K562 (cell line): ENCODE measurements at regions of chr9 and their contacts with region 1.

Region 1: GRCh38 chr9:76887003-76887821 is 18.7 kb downstream of the PRUNE2 start:
- DNase-seq: no peak
- ATAC-seq: no peak
- H3K4me3 ChIP-seq: no peak overlapping the region
- H3K27ac ChIP-seq: no peak overlapping the region
- H3K4me1 ChIP-seq: no peaks in the 10 kb centered on the region
- H3K27me3 ChIP-seq: no peaks in the 10 kb centered on the region; a peak in 1 of 5 replicates
- CTCF ChIP-seq: no peak
- EP300 ChIP-seq: no peak
- POLR2A ChIP-seq: no peak
- RAD21 ChIP-seq: no peak

Region 2: DNA sequence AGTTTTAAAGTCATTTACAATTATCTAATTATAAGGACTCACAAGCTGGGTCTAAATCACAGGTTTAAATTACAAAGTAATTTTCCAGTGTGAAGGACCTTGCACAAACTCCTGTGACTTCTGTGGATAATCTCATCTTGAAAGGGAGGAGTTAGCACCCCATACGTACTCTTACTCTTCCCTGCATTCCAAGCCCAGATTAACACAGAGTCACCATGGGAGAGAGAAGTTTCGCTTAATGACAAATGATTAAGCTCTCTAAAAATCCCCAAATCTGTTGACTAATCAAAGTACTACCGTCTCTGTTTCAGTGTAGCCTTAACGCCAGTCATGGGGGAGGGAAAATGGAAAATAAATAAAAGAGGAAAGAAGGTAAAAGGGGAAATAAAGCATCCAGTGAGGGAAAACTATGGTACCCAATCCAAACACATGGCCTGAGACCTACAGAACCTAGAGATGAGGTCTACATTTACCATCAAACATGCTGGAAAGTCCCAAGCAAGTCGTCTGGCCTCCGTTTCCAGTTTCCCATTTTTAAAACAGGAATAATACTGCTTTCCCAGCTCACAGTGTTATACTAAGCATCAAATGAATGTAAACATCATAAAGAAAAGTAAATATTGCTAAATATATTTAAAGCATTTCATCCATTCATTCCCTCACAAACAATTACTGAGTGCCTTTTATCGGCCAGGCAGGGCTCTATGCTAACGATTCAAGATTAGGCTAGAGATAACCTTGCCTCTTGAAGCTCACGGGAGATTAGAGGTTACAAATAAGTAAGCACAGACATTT is 59.7 kb before region 1 on chr9:
- CTCF ChIA-PET with region 1: no interaction called
- POLR2A ChIA-PET with region 1: no interaction called
- in situ Hi-C with region 1: no loop called
- intact Hi-C with region 1: loop called (anchors 10 kb)
- DNase-seq: no peak
- ATAC-seq: no peak
- H3K4me3 ChIP-seq: no peak overlapping the region
- H3K27ac ChIP-seq: no peak overlapping the region
- H3K4me1 ChIP-seq: no peaks in the 10 kb centered on the region
- H3K27me3 ChIP-seq: no peaks in the 10 kb centered on the region
- CTCF ChIP-seq: no peak
- EP300 ChIP-seq: no peak
- POLR2A ChIP-seq: no peak
- RAD21 ChIP-seq: no peak

Region 3: DNA sequence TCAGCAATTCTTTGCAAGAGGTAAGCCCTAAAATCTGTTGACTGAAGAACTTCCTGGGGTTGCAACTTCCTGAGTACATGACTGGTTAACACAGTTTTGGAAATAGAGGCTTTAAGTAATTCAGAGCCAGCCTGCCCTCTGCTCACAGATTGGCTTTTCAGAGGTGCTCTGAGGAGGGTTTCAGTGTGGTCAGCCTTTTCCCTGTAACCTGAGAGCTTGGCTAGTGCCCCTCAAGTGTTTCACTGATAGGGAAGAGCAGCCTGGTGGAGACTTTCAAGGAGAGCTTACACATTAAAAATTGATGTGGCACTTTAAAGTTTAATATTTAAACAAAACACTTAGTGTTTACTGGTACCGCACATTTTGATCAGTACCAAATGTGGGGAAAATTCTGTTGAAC is 75.5 kb after region 1 on chr9:
- CTCF ChIA-PET with region 1: no interaction called
- POLR2A ChIA-PET with region 1: no interaction called
- in situ Hi-C with region 1: no loop called
- intact Hi-C with region 1: no loop called
- DNase-seq: no peak
- ATAC-seq: no peak
- H3K4me3 ChIP-seq: no peak overlapping the region
- H3K27ac ChIP-seq: no peak overlapping the region
- H3K4me1 ChIP-seq: no peaks in the 10 kb centered on the region
- H3K27me3 ChIP-seq: peaks cover 0 to 6% of the 10 kb centered on the region in 2 experiments; a peak in 2 of 5 replicates
- CTCF ChIP-seq: no peak
- EP300 ChIP-seq: no peak
- POLR2A ChIP-seq: no peak
- RAD21 ChIP-seq: no peak